CD14-positive monocyte (primary cell): ENCODE measurements at regions of chr12 and their contacts with region 1.

Region 1: DNA sequence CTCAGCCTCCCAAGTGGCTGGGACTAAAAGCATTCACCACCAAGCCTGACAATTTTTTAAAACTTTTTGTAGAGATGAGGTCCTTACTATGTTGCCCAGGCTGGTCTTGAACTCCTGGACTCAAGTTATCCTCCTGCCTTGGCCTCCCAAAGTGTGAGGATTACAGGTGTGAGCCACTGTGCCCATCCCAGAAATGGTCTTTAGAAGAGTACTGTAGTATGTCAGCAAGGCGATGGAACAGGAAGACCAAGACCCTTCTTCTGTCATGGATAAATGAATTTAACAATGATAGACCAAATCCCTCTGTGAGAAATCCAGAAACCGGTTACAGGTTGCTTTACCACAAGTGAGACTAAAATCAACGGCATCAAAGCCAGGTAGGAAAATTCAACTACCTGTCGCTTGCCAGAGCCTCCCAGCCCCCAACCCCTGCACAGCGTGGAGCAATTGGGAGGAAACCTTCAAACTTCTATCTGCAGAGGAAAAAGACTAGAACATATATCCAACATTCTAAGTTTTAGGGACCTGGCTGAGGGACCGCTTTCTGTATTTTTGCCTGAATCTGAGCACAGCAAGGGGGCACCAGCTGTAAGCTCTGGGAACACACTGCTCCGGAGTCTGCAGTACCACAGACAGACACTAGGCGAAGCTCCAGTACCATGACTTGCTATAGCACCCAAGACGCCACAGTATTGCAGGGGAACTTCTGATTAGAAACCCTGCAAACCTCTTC is 51.3 kb downstream of the CPSF6 start:
- DNase-seq: peak; percentile 83 to 92 (median 85)
- H3K4me3 ChIP-seq: peak overlapping the region in 2 of 3 experiments; percentile 60 to 69
- H3K4me3 Mint-ChIP-seq: peak overlapping the region; percentile 17 to 77
- H3K27ac ChIP-seq: peak overlapping the region in 1 of 2 donors; percentile 66
- H3K27ac Mint-ChIP-seq: peak overlapping the region in 4 of 7 donors; percentile 43 to 69 (median 58)
- H3K4me1 ChIP-seq: peaks cover 29 to 51% of the 10 kb centered on the region in 2 donors
- H3K4me1 Mint-ChIP-seq: peaks cover 48% of the 10 kb centered on the region
- H3K27me3 ChIP-seq: peaks cover 7 to 26% of the 10 kb centered on the region in 2 donors
- H3K27me3 Mint-ChIP-seq: peaks cover 8 to 15% (median 13%) of the 10 kb centered on the region in 3 donors
- CTCF ChIP-seq: peak; percentile 98

Region 2: DNA sequence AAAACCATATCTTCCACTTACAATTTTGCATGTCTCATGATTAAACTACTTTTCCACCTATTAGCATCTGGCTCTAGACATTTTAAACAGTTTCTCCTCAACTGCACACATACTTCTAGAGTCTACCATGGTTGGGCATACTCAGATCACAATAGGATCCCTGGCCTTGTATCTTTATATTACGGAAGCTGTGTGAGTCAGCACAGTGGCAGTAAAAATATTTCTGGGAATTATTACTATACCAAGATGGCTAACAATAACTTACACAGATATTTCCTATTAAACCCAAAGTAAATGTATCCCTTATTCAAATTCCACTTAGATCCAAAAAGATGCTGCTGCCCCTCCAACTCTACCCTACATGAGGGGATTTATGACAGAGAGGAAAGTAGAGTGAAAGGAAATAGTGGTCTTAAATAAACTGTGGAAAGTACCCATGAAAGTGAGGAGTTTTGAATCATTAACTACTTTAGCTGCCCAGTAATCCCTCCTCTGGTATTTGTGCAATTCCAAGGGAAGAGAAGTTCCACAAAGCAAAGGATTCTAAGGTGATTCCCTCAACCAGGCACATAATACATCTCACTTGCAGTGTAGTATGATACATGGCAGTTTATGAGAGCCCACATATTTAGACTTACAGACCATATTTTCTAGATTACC is 65.3 kb before region 1 on chr12:
- intact Hi-C with region 1: no loop called
- DNase-seq: no peak
- H3K4me3 ChIP-seq: no peak overlapping the region
- H3K4me3 Mint-ChIP-seq: no peak overlapping the region
- H3K27ac ChIP-seq: no peak overlapping the region
- H3K27ac Mint-ChIP-seq: no peak overlapping the region
- H3K4me1 ChIP-seq: no peaks in the 10 kb centered on the region
- H3K4me1 Mint-ChIP-seq: no peaks in the 10 kb centered on the region
- H3K27me3 ChIP-seq: no peaks in the 10 kb centered on the region
- H3K27me3 Mint-ChIP-seq: no peaks in the 10 kb centered on the region
- CTCF ChIP-seq: no peak

Region 3: DNA sequence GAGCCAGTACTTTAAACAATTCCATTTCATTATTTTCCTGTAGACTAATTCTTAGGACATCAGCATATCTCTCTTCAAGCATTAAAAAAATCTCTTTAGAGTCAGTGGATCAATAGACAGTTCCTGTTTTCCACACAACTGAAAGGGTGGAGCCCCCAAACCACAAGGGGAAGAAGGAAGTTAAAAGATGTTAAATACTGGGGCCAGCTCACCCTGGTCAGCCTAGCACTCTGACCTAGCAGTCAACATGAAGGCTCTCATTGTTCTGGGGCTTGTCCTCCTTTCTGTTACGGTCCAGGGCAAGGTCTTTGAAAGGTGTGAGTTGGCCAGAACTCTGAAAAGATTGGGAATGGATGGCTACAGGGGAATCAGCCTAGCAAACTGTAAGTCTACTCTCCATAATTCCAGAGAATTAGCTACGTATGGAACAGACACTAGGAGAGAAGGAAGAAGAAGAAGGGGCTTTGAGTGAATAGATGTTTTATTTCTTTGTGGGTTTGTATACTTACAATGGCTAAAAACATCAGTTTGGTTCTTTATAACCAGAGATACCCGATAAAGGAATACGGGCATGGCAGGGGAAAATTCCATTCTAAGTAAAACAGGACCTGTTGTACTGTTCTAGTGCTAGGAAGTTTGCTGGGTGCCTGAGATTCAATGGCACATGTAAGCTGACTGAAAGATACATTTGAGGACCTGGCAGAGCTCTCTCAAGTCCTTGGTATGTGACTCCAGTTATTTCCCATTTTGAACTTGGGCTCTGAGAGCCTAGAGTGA is 57.6 kb after region 1 on chr12 and contains the start of gene LYZ:
- intact Hi-C with region 1: loop called in 1 of 2 experiments (anchors 5 kb)
- DNase-seq: peak; percentile 85 to 91 (median 87)
- H3K4me3 ChIP-seq: peak within 1 kb of the TSS; percentile 83 to 100 (median 92)
- H3K4me3 Mint-ChIP-seq: peak within 1 kb of the TSS; percentile 99 to 100
- H3K27ac ChIP-seq: peak within 1 kb of the TSS; percentile 66 to 86
- H3K27ac Mint-ChIP-seq: peak within 1 kb of the TSS; percentile 85 to 98 (median 97)
- H3K4me1 ChIP-seq: peaks cover 58 to 63% of the 10 kb centered on the region in 2 donors
- H3K4me1 Mint-ChIP-seq: peaks cover 52% of the 10 kb centered on the region
- H3K27me3 ChIP-seq: no peaks in the 10 kb centered on the region
- H3K27me3 Mint-ChIP-seq: no peaks in the 10 kb centered on the region
- CTCF ChIP-seq: no peak
- polyA plus RNA-seq, gene LYZ: 10,434 to 46,644 (median 13,865) TPM

Region 4: DNA sequence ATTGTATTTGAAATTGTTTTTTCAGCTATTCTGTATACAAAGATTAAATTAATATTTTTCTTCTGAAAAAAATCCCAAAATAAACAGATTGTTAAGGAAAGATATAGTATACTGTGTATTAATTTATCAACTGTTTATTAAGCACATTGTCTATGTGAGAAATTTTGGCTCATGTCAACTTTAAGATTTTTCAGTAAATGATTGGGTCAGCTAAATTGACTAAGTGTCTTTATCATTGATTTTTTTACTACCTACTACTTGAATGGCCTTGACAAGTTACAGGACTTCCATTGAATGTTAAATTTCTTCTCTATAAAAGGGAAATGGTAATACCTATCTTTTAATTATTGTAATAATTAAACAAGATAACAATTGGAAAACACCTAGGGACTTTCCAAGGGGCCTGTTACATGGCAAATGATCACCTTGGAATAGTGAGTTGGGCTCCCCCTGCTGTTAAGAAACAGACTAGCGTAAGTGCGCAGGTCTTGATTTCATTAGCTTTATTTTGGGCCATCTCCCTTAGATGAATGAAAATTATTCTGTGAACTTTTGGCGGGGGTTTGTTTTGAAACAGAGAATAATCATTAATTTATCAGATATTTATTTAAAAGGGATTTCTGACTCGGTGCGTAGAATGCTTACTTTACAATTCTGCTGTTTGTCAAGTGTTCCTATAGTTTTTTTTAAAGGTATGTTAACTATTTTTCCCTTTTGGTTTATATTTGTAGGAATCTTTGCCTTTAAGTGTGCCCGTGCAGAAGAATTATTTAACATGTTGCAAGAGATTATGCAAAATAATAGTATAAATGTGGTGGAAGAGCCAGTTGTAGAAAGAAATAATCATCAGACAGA is 280.1 kb after region 1 on chr12:
- intact Hi-C with region 1: loop called (anchors 5 kb)
- DNase-seq: peak; percentile 29 to 57 (median 55)
- H3K4me3 ChIP-seq: no peak overlapping the region
- H3K4me3 Mint-ChIP-seq: no peak overlapping the region
- H3K27ac ChIP-seq: no peak overlapping the region
- H3K27ac Mint-ChIP-seq: no peak overlapping the region
- H3K4me1 ChIP-seq: no peaks in the 10 kb centered on the region
- H3K4me1 Mint-ChIP-seq: no peaks in the 10 kb centered on the region
- H3K27me3 ChIP-seq: no peaks in the 10 kb centered on the region
- H3K27me3 Mint-ChIP-seq: peaks cover 0 to 2% (median 0%) of the 10 kb centered on the region in 3 donors
- CTCF ChIP-seq: peak; percentile 90